Activated T-helper 2 cell treated with anti-CD3 and anti-CD28 coated beads, Interferon-gamma antibody, Interleukin-2, Interleukin-4, amounts not matched to agents 10 μg/mL and 5 μg/mL and 100 μg/mL, durations not matched to agents 14 hours and 24 hours and 36 hours (primary cell): ENCODE measurements at regions of chr10 and their contacts with region 1.

Region 1: GRCh38 chr10:8331883-8332729 is 277.6 kb downstream of the GATA3 start:
- DNase-seq: peak; percentile 91
- H3K4me3 Mint-ChIP-seq: peak overlapping the region; percentile 90
- H3K27ac Mint-ChIP-seq: peak overlapping the region; percentile 99
- H3K4me1 Mint-ChIP-seq: peaks cover 69% of the 10 kb centered on the region
- H3K27me3 Mint-ChIP-seq: no peaks in the 10 kb centered on the region

Region 2: GRCh38 chr10:8059959-8060703 is 272.0 kb before region 1 on chr10:
- intact Hi-C with region 1: loop called (anchors 2 kb)
- DNase-seq: peak; percentile 81
- H3K4me3 Mint-ChIP-seq: peak overlapping the region; percentile 92
- H3K27ac Mint-ChIP-seq: peak overlapping the region; percentile 94
- H3K4me1 Mint-ChIP-seq: peaks cover 50% of the 10 kb centered on the region
- H3K27me3 Mint-ChIP-seq: no peaks in the 10 kb centered on the region

Region 3: GRCh38 chr10:8315619-8316021 is 16.5 kb before region 1 on chr10:
- intact Hi-C with region 1: loop called (anchors 2 kb)
- DNase-seq: no peak
- H3K4me3 Mint-ChIP-seq: no peak overlapping the region
- H3K27ac Mint-ChIP-seq: peak overlapping the region; percentile 70
- H3K4me1 Mint-ChIP-seq: peaks cover 64% of the 10 kb centered on the region
- H3K27me3 Mint-ChIP-seq: no peaks in the 10 kb centered on the region

Region 4: GRCh38 chr10:8350351-8350967 is 18.4 kb after region 1 on chr10:
- intact Hi-C with region 1: loop called (anchors 1 kb)
- DNase-seq: no peak
- H3K4me3 Mint-ChIP-seq: peak overlapping the region; percentile 45
- H3K27ac Mint-ChIP-seq: peak overlapping the region; percentile 96
- H3K4me1 Mint-ChIP-seq: peaks cover 73% of the 10 kb centered on the region
- H3K27me3 Mint-ChIP-seq: no peaks in the 10 kb centered on the region

Region 5: DNA sequence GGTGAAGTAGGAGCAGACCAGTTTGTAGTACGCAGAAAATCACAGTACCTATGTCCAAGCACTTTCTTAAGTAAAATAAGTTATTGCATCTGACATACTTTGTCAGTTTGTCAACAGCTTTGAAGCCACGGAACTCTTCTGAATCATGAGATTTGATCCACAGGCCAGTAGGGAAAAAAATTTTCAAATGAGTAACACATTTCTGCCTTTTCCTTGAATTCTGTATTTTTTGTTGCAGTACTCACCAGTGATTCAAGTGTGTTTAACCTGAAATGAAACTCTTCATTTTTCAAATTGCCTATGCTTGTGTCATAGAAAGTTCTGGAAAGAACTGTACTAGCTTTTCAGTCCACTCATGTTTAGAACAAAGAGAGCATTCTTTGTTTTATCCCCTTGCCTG is 60.1 kb after region 1 on chr10:
- intact Hi-C with region 1: no loop called
- DNase-seq: no peak
- H3K4me3 Mint-ChIP-seq: no peak overlapping the region
- H3K27ac Mint-ChIP-seq: no peak overlapping the region
- H3K4me1 Mint-ChIP-seq: peaks cover 26% of the 10 kb centered on the region
- H3K27me3 Mint-ChIP-seq: no peaks in the 10 kb centered on the region

Region 6: DNA sequence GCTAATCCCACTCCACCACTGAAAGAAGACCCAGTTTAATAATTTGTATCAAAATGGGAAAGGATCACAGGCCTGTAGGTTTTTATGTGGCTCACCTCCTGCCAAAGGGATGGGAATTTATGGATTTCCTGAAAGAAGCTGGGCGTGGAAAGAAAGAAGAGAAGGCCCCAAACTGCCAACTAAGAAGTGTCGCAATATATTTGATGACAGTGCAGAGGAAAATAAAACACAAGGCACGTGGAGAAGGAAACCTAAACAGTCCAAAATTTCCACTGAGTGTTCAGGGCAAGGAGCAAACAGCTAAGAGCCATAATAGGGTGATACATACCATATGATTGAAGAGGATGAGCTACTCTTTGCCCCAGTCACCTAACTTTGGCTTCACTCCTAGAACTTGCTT is 389.5 kb after region 1 on chr10:
- intact Hi-C with region 1: no loop called
- DNase-seq: no peak
- H3K4me3 Mint-ChIP-seq: no peak overlapping the region
- H3K27ac Mint-ChIP-seq: no peak overlapping the region
- H3K4me1 Mint-ChIP-seq: peaks cover 10% of the 10 kb centered on the region
- H3K27me3 Mint-ChIP-seq: no peaks in the 10 kb centered on the region

Region 7: DNA sequence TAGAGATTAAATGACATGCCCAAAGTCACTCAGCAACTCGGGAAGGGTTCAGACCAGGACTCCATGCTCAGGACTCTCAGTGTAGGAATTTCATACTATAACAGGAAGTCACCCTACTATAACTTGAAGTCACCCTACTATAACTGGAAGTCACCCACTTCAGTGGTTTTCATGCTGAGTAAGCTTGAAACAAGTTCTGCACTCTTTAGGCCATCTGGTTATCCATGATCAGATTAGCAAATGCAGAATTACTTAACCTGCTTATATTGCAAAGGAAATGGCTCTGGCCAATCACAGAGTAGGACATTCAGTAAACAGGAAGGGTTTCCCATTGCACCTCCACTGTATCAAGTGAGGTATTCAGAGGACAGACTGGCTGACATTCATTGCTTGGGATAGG is 962.8 kb after region 1 on chr10:
- intact Hi-C with region 1: loop called (anchors 10 kb)
- DNase-seq: no peak
- H3K4me3 Mint-ChIP-seq: no peak overlapping the region
- H3K27ac Mint-ChIP-seq: peak overlapping the region; percentile 71
- H3K4me1 Mint-ChIP-seq: peaks cover 27% of the 10 kb centered on the region
- H3K27me3 Mint-ChIP-seq: peaks cover 2% of the 10 kb centered on the region